PC-9 (cell line): ENCODE measurements at regions of chr2 and their contacts with region 1.

Region 1: DNA sequence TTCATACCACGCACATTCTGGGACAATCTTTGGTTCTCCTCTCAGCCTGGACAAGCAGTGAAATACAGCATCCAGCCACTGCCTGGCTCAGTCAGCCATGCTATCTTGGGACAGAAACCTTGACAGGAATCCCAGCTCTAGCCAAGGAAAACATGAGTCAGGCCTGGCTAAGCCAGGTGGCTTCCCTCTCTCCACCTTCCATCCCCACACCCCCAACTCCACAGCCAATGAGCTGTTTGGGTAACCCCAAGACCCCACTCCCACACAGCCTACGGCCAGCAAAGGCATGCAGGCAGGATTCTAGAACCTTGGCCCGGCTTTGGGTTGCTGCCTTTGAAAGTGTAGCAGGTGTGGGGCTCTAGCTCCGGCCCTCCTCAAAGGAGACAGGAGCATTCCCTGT is 64.8 kb downstream of the MCFD2 start:
- DNase-seq: peak; percentile 67 to 75
- H3K4me3 ChIP-seq: no peak overlapping the region
- H3K27ac ChIP-seq: peak overlapping the region; percentile 45
- H3K4me1 ChIP-seq: peaks cover 77% of the 10 kb centered on the region
- H3K27me3 ChIP-seq: no peaks in the 10 kb centered on the region
- CTCF ChIP-seq: no peak

Region 2: GRCh38 chr2:46776687-46777327 is 74.0 kb before region 1 on chr2:
- CTCF ChIA-PET with region 1: interaction called, 12 read pairs
- POLR2A ChIA-PET with region 1: no interaction called
- intact Hi-C with region 1: loop called (anchors 5 kb)
- DNase-seq: peak; percentile 34 to 51
- H3K4me3 ChIP-seq: no peak overlapping the region
- H3K27ac ChIP-seq: no peak overlapping the region
- H3K4me1 ChIP-seq: peaks cover 9% of the 10 kb centered on the region
- H3K27me3 ChIP-seq: no peaks in the 10 kb centered on the region
- CTCF ChIP-seq: peak; percentile 85

Region 3: GRCh38 chr2:46787364-46787763 is 63.4 kb before region 1 on chr2:
- CTCF ChIA-PET with region 1: interaction called, 11 read pairs
- POLR2A ChIA-PET with region 1: no interaction called
- intact Hi-C with region 1: no loop called
- DNase-seq: no peak
- H3K4me3 ChIP-seq: no peak overlapping the region
- H3K27ac ChIP-seq: no peak overlapping the region
- H3K4me1 ChIP-seq: no peaks in the 10 kb centered on the region
- H3K27me3 ChIP-seq: no peaks in the 10 kb centered on the region
- CTCF ChIP-seq: no peak